Left ventricle myocardium inferior (tissue), 1 donor: ENCODE measurements at regions of chr2 and their contacts with region 1.

Region 1: DNA sequence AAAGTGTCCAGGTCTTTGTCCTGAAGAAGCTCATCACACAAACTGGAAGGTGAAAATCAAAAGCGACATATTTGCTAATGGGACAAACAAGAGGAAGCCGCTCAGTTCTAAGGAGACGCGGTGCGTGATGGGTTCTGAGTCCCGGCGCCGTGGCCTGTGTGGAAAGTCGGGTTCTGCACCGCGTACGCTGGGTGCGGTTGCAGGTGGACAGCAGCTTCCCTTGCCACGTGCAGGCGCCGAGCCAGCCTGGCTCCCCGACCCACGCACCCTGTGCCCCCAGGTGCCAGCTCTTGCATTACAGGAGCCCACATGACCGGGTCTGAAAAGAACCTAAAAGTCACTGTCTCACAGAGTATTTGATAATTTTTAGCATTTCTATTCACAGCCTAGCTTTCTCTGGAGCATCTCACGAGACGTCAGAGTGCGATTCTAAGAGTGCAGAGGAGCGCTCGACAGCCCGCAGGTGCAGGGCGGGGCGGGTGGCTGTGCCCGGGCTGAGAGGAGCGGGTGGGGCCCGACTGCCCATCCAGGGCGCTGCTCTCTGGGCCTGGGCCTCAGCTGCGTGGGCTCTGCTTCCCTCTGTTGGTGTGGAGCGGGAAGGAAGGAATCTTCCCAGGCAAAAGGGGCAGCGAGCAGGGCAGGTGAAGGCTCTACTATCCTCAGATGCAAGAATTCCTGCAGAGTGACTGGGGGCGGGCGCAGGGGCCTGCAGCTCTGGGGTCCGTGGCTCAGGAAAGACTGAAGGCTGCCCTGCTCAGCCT is 39.4 kb downstream of the MYT1L start:
- DNase-seq: peak; percentile 25
- H3K4me3 ChIP-seq: no peak overlapping the region
- H3K27ac ChIP-seq: no peak overlapping the region
- H3K4me1 ChIP-seq: no peaks in the 10 kb centered on the region
- H3K27me3 ChIP-seq: peaks cover 63% of the 10 kb centered on the region
- CTCF ChIP-seq: peak; percentile 76

Region 2: DNA sequence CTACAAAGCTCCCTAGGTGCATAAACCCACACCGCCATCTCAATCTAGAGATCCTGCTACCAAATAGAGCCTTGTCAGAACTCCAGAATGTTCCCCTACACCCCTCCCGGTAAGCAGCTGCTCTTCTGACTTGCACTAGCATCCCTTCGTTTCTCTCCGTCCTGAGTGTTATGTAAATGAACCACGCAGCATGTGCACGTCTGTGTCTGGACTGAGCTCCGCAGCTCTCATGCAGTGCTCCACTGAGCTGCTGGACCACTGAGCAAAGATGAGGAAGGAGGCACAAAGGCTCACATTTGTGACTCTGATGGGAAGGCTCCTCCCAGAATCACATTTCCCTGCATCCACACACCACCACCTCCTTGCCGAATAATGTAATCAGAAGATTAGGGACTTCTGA is 164.2 kb before region 1 on chr2:
- intact Hi-C with region 1: loop called (anchors 10 kb)
- DNase-seq: no peak
- H3K4me3 ChIP-seq: no peak overlapping the region
- H3K27ac ChIP-seq: no peak overlapping the region
- H3K4me1 ChIP-seq: no peaks in the 10 kb centered on the region
- H3K27me3 ChIP-seq: peaks cover 41% of the 10 kb centered on the region
- CTCF ChIP-seq: no peak

Region 3: GRCh38 chr2:2810504-2810903 is 518.8 kb after region 1 on chr2:
- intact Hi-C with region 1: no loop called
- DNase-seq: no peak
- H3K4me3 ChIP-seq: no peak overlapping the region
- H3K27ac ChIP-seq: no peak overlapping the region
- H3K4me1 ChIP-seq: no peaks in the 10 kb centered on the region
- H3K27me3 ChIP-seq: peaks cover 4% of the 10 kb centered on the region
- CTCF ChIP-seq: no peak